CD4-positive, alpha-beta T cell (primary cell): ENCODE measurements at regions of chr7 and their contacts with region 1.

Region 1: GRCh38 chr7:50369143-50370026 is 64.9 kb downstream of the IKZF1 start:
- DNase-seq: peak in 7 of 14 experiments; percentile 45 to 91 (median 65)
- ATAC-seq: peak; percentile 58
- H3K4me3 ChIP-seq: no peak overlapping the region
- H3K4me3 Mint-ChIP-seq: peak overlapping the region; percentile 71
- H3K27ac ChIP-seq: peak overlapping the region; percentile 68 to 73
- H3K27ac Mint-ChIP-seq: no peak overlapping the region
- H3K4me1 ChIP-seq: peaks cover 80% of the 10 kb centered on the region
- H3K4me1 Mint-ChIP-seq: peaks cover 97% of the 10 kb centered on the region
- H3K27me3 ChIP-seq: no peaks in the 10 kb centered on the region
- H3K27me3 Mint-ChIP-seq: no peaks in the 10 kb centered on the region
- CTCF ChIP-seq: peak; percentile 88

Region 2: DNA sequence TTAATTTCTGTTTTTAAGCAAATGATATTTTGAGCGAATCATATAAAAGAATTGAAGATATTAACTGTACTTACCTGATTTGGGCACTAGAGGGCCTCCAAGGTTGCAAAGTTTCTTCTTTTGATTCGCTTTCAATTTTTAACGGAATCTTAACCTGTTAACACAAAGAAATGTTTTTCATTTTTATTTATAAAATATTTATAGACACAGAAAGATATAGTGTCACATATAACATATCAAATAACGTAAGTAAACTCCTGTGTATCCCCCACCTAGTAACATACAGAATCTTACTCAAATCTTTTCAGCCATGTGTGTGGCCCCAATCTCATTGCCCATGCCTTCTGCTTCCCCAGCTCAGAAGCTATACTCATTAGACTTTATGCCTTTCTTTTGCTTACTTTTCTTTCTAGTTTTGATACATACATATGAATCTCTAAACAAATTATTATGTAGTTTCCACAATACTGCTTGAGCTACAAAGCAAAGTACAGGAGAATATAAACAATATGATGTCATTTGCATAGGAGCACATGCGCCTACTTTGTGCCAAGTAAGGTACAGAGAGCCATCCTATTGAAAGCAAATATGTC is 226.9 kb before region 1 on chr7:
- CTCF ChIA-PET with region 1: interaction called, 5 read pairs
- POLR2A ChIA-PET with region 1: interaction called, 6 read pairs
- intact Hi-C with region 1: loop called (anchors 1 kb)
- DNase-seq: peak in 7 of 14 experiments; percentile 24 to 83 (median 66)
- ATAC-seq: peak; percentile 75
- H3K4me3 ChIP-seq: no peak overlapping the region
- H3K4me3 Mint-ChIP-seq: peak overlapping the region; percentile 44
- H3K27ac ChIP-seq: no peak overlapping the region
- H3K27ac Mint-ChIP-seq: peak overlapping the region; percentile 35
- H3K4me1 ChIP-seq: peaks cover 15% of the 10 kb centered on the region
- H3K4me1 Mint-ChIP-seq: peaks cover 33% of the 10 kb centered on the region
- H3K27me3 ChIP-seq: no peaks in the 10 kb centered on the region
- H3K27me3 Mint-ChIP-seq: no peaks in the 10 kb centered on the region
- CTCF ChIP-seq: peak; percentile 83

Region 3: DNA sequence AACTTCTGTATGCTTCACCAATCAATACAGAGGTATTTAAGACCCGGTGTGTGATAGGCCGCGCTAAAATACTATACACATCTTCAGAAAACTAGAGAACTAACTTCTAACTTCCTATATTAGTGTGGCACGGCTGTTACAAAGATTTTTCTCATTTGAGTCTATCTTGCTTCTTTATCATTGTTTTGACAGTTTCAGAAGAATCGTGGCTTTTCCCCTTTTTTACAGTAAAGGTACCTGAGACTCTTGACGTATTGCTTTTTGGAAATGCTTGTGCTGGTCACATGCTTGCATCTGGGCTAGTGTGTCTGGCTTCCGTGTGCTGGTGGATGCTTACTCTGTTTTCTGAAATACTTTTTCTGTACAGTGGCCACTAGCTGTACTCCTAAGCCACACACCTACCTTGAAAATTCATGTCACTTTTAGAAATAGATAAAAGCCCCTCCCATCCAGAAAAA is 52.1 kb before region 1 on chr7:
- CTCF ChIA-PET with region 1: interaction called, 16 read pairs
- POLR2A ChIA-PET with region 1: interaction called, 2,111 read pairs
- intact Hi-C with region 1: loop called in 1 of 2 experiments (anchors 1 kb)
- DNase-seq: peak in 7 of 14 experiments; percentile 46 to 94 (median 75)
- ATAC-seq: peak; percentile 73
- H3K4me3 ChIP-seq: peak overlapping the region; percentile 55
- H3K4me3 Mint-ChIP-seq: peak overlapping the region; percentile 100
- H3K27ac ChIP-seq: peak overlapping the region; percentile 91 to 93
- H3K27ac Mint-ChIP-seq: no peak overlapping the region
- H3K4me1 ChIP-seq: peaks cover 71% of the 10 kb centered on the region
- H3K4me1 Mint-ChIP-seq: peaks cover 98% of the 10 kb centered on the region
- H3K27me3 ChIP-seq: no peaks in the 10 kb centered on the region
- H3K27me3 Mint-ChIP-seq: no peaks in the 10 kb centered on the region
- CTCF ChIP-seq: peak; percentile 29

Region 4: GRCh38 chr7:50349963-50350944 is 19.1 kb before region 1 on chr7:
- CTCF ChIA-PET with region 1: interaction called, 12 read pairs
- POLR2A ChIA-PET with region 1: interaction called, 962 read pairs
- intact Hi-C with region 1: loop called (anchors 2 kb)
- DNase-seq: peak; percentile 47 to 84 (median 75)
- ATAC-seq: peak; percentile 63
- H3K4me3 ChIP-seq: peak overlapping the region; percentile 23
- H3K4me3 Mint-ChIP-seq: peak overlapping the region; percentile 52
- H3K27ac ChIP-seq: peak overlapping the region; percentile 86 to 95
- H3K27ac Mint-ChIP-seq: no peak overlapping the region
- H3K4me1 ChIP-seq: peaks cover 92% of the 10 kb centered on the region
- H3K4me1 Mint-ChIP-seq: peaks cover 98% of the 10 kb centered on the region
- H3K27me3 ChIP-seq: no peaks in the 10 kb centered on the region
- H3K27me3 Mint-ChIP-seq: no peaks in the 10 kb centered on the region
- CTCF ChIP-seq: no peak

Region 5: DNA sequence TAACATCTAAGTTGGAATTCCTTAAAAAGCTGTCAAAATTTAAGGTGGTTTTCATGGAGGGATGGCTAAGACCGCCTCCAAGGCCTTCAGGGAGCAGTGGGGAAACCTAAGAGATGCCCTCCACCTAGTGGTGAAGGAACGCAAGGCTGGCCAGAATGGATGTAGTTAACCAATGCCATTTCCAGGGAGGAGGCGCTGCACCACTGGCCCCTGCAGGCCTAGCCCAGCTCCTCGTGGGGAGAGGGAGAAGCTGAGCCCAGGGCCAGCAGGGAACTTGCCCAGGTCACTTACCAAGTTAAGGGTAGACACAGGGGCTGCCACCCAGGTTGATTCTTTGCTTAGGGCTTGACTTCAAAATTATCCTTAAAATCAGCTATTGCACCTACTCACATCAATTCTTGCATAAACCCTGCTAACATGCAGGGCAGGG is 48.7 kb after region 1 on chr7:
- CTCF ChIA-PET with region 1: interaction called, 17 read pairs
- POLR2A ChIA-PET with region 1: no interaction called
- intact Hi-C with region 1: loop called in 1 of 2 experiments (anchors 2 kb)
- DNase-seq: peak; percentile 50 to 86 (median 62)
- ATAC-seq: peak; percentile 91
- H3K4me3 ChIP-seq: no peak overlapping the region
- H3K4me3 Mint-ChIP-seq: no peak overlapping the region
- H3K27ac ChIP-seq: no peak overlapping the region
- H3K27ac Mint-ChIP-seq: no peak overlapping the region
- H3K4me1 ChIP-seq: peaks cover 28% of the 10 kb centered on the region
- H3K4me1 Mint-ChIP-seq: peaks cover 31% of the 10 kb centered on the region
- H3K27me3 ChIP-seq: no peaks in the 10 kb centered on the region
- H3K27me3 Mint-ChIP-seq: no peaks in the 10 kb centered on the region
- CTCF ChIP-seq: peak; percentile 96

Region 6: GRCh38 chr7:51123322-51124029 is 754.1 kb after region 1 on chr7:
- CTCF ChIA-PET with region 1: no interaction called
- POLR2A ChIA-PET with region 1: no interaction called
- intact Hi-C with region 1: no loop called
- DNase-seq: peak in 12 of 14 experiments; percentile 4 to 44 (median 24)
- ATAC-seq: peak; percentile 74
- H3K4me3 ChIP-seq: no peak overlapping the region
- H3K4me3 Mint-ChIP-seq: no peak overlapping the region
- H3K27ac ChIP-seq: no peak overlapping the region
- H3K27ac Mint-ChIP-seq: peak overlapping the region; percentile 60
- H3K4me1 ChIP-seq: peaks cover 8% of the 10 kb centered on the region
- H3K4me1 Mint-ChIP-seq: peaks cover 34% of the 10 kb centered on the region
- H3K27me3 ChIP-seq: no peaks in the 10 kb centered on the region
- H3K27me3 Mint-ChIP-seq: no peaks in the 10 kb centered on the region
- CTCF ChIP-seq: no peak